Mammary epithelial cell (primary cell): ENCODE measurements at regions of chr9 and their contacts with region 1.

Region 1: GRCh38 chr9:26193237-26193636 is 515.0 kb upstream of the TUSC1 start:
- DNase-seq: no peak
- H3K4me3 ChIP-seq: no peak overlapping the region
- H3K27ac ChIP-seq: no peak overlapping the region
- H3K4me1 ChIP-seq: no peaks in the 10 kb centered on the region
- H3K27me3 ChIP-seq: no peaks in the 10 kb centered on the region
- CTCF ChIP-seq: no peak

Region 2: DNA sequence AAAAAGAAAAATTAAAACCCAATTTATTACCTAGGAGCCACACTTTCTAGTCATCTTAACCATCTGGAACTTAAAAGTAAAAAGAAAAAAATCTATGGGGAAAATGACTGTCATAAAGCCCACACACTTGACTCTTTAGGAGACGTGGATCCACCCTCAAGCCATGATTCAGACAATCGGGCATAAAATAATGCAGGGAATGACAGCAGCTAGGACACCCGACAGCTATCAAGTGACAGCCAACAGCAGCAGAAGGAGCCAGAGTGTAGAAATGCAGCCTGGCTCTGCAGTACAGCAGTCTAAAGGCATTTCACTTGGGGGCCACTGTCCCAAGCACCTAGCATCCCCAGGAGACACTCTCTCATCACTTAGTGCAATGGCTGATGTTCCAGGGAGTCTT is 472.4 kb after region 1 on chr9:
- CTCF ChIA-PET with region 1: interaction called, 15 read pairs
- dilution Hi-C with region 1: no loop called
- in situ Hi-C with region 1: no loop called
- intact Hi-C with region 1: no loop called
- DNase-seq: no peak
- H3K4me3 ChIP-seq: no peak overlapping the region
- H3K27ac ChIP-seq: no peak overlapping the region
- H3K4me1 ChIP-seq: no peaks in the 10 kb centered on the region
- H3K27me3 ChIP-seq: no peaks in the 10 kb centered on the region
- CTCF ChIP-seq: no peak